Sciatic nerve (tissue), 2 donors: ENCODE measurements at regions of chr18 and their contacts with region 1.

Region 1: GRCh38 chr18:63320046-63320689 is 599 bp upstream of the BCL2 start:
- DNase-seq: peak; percentile 90
- ATAC-seq: peak; percentile 75

Region 2: GRCh38 chr18:62925031-62925688 is 395.0 kb before region 1 on chr18:
- intact Hi-C with region 1: no loop called
- DNase-seq: no peak
- ATAC-seq: no peak

Region 3: GRCh38 chr18:63131106-63131958 is 188.8 kb before region 1 on chr18:
- intact Hi-C with region 1: loop called (anchors 5 kb)
- DNase-seq: peak; percentile 77
- ATAC-seq: peak; percentile 71

Region 4: DNA sequence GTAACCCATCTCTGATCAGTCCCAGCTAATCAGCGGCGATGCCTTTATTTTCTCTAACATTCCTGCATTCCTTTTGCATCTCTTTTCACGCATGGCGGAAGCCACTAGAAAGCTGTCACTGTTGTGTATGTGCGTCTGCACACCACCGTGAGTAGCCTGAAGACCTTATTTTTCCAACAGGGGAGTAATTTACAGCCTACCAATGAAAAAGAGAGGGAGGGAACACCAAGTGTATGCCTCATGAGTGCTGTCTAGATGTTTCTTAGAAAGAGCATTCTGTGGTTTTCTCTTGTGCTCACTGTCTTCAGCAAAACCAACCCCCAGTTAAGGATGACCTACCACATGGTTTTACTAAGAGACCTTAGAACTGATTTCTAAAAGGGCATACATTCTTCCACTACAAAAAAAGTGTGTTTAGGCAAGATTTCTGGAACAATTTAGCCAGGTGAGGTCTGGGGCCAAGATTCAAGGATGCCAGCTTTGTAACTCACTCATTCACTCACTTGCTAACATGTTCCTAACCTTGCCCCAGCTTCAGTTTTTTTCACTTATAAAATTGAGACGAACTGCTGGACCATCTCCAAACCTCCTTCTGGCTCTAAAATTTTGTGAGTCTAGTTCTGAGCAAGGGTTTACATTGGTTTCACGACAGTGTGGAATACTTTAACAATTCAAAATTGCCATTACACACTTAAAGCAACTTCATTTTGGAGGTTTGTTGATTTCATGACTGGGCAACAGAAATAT is 52.0 kb before region 1 on chr18:
- intact Hi-C with region 1: loop called (anchors 10 kb)
- DNase-seq: no peak
- ATAC-seq: no peak

Region 5: GRCh38 chr18:64645753-64646322 is 1325.7 kb after region 1 on chr18:
- intact Hi-C with region 1: no loop called
- DNase-seq: no peak
- ATAC-seq: no peak